ENCODE measurements at regions of chr17 and their contacts with region 1.

Region 1: DNA sequence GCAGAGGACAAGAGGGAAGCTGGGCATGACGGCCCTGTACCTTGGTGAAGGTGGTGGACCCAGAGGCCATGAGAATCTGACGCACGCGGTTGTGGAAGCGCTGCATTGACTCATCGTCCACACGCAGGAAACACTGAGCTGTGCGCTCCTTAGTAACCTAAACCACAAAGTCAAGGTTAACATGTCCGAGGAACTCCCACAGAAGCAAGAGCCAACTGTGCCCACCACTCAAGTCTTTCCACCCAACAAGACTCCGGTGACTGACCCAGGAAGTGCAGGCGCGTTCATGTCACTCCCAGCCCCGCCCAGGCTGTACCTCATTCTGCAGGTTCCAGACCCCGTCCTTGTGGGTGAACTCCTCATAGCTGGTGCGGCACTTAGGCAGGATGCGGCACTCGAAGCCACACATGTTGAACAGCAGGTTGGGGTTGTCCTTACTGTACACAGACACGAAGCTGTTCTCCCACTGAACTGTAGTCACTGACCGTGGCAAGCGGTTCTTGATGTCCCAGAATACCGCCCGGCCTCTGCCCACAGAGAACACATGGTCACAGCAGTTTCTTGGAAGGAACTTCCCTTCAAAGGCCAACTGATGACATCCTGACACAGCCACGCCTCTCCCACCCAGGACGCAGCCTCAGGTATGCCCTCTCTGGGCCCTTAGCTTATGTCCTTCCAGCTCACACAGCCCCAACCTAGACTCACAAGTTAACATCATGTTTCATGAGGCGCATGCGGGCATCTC is 11.5 kb downstream of the PRPF8 start:
- DNase-seq: no peak
- ATAC-seq: no peak
- H3K4me3 ChIP-seq: no peak overlapping the region
- H3K27ac ChIP-seq: no peak overlapping the region
- H3K4me1 ChIP-seq: no peaks in the 10 kb centered on the region
- H3K27me3 ChIP-seq: no peaks in the 10 kb centered on the region
- CTCF ChIP-seq: no peak
- EP300 ChIP-seq: no peak
- POLR2A ChIP-seq: 0 out of 4 replicates have a peak, but pooled peaks of 1 of the 2 experiments have one; percentile 12
- RAD21 ChIP-seq: no peak

Region 2: DNA sequence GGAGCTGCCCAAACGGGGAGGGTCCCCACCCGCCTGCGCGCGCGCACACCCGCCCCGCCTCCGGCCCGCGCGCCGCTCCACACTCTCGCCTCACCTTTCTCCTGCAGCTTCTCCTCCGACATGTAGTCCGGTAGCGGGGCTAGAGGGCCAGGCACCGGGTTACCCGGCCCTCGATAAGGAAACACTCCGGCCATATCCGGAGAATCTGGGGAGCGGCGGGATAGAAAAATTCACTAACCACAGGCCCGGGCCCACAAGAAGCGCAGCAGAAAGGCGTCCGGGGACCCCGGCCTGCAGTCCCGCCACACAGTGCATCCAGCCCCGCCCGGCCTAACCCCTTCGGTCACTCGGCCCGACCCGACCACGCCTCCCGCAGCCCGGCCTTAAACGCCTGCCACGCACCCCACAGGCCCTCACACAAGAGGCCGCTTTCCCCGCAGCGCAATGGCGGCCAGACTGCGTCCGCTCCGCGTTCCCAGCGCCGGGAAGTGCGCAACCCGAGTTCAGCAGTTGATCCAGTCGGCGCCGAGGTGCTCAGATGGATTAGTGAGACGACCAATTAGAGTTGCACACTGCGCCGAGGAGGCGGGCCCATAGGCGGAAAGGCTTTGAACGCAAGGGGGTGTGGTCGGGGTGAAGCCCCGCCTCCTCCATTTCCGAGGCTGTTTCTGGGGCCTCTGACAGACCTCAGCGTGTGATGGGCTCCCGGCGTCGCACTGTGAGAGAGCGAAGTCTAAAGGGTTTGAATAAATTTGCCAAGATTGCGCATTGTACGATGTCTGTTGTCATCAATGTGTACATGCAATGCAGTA is 11.4 kb after region 1 on chr17 and contains the start of gene PRPF8:
- CTCF ChIA-PET with region 1: no interaction called
- POLR2A ChIA-PET with region 1: interaction called, 12 read pairs
- in situ Hi-C with region 1: no loop called
- intact Hi-C with region 1: no loop called
- DNase-seq: peak; percentile 94
- ATAC-seq: peak; percentile 99
- H3K4me3 ChIP-seq: peak within 1 kb of the TSS; percentile 88 to 90 (median 89)
- H3K27ac ChIP-seq: peak within 1 kb of the TSS; percentile 88
- H3K4me1 ChIP-seq: peaks cover 28% of the 10 kb centered on the region
- H3K27me3 ChIP-seq: no peaks in the 10 kb centered on the region
- CTCF ChIP-seq: no peak
- EP300 ChIP-seq: 0 out of 4 replicates have a peak, but pooled peaks of 1 of the 2 experiments have one; percentile 7
- POLR2A ChIP-seq: peak; percentile 92 to 93
- RAD21 ChIP-seq: no peak; the same call in 1 of the 2 replicates
- total RNA-seq, gene PRPF8: 112 and 318 TPM in 2 replicates

Region 3: GRCh38 chr17:1783834-1784611 is 110.8 kb after region 1 on chr17:
- CTCF ChIA-PET with region 1: interaction called, 7 read pairs
- POLR2A ChIA-PET with region 1: interaction called, 5 read pairs
- in situ Hi-C with region 1: no loop called
- intact Hi-C with region 1: loop called (anchors 1 kb)
- DNase-seq: peak; percentile 67
- ATAC-seq: peak; percentile 87
- H3K4me3 ChIP-seq: no peak overlapping the region
- H3K27ac ChIP-seq: no peak overlapping the region
- H3K4me1 ChIP-seq: peaks cover 7% of the 10 kb centered on the region
- H3K27me3 ChIP-seq: no peaks in the 10 kb centered on the region
- CTCF ChIP-seq: peak; percentile 83
- EP300 ChIP-seq: no peak
- POLR2A ChIP-seq: no peak
- RAD21 ChIP-seq: peak; percentile 84

Region 4: DNA sequence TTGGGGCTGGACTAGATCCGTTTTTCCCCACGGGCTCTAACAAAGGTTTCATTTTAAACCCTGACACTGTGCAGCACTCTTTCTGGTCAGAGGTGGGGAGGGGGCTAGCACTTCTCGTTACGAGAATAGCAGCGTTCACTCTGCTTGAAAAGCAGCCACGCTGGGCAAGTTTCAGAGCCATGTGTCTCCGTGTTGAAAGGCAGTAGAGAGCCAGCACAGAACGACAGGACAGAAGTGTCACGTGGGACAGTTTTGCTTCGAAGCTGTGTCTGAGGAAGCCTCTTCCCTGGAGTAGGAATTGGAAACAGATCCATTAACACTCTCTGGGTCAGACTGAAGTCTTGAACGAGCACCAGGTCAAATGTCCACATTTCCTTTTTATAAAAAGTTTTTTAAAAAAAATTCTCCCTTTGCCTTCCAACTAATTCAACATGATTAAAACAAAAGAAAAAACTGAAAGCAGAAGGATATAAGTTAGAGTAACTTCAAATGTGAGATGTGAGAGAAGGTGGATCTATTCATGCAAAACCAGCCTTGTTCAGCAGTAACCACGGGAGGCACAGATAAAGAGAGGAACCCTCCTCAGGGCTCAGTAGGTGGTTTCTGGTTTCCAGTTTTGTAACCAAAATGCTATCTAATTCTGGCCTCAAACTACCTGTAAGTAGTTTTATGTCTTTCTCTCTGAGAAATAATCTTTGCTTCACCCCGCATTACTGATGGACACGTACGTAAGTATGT is 565.4 kb after region 1 on chr17:
- CTCF ChIA-PET with region 1: no interaction called
- POLR2A ChIA-PET with region 1: no interaction called
- in situ Hi-C with region 1: no loop called
- intact Hi-C with region 1: no loop called
- DNase-seq: no peak
- ATAC-seq: no peak
- H3K4me3 ChIP-seq: no peak overlapping the region
- H3K27ac ChIP-seq: no peak overlapping the region
- H3K4me1 ChIP-seq: no peaks in the 10 kb centered on the region
- H3K27me3 ChIP-seq: no peaks in the 10 kb centered on the region; a peak in 1 of 5 replicates
- CTCF ChIP-seq: no peak
- EP300 ChIP-seq: no peak
- POLR2A ChIP-seq: no peak
- RAD21 ChIP-seq: no peak